HEK293 (cell line): ENCODE measurements at regions of chr22 and their contacts with region 1.

Region 1: GRCh38 chr22:38069372-38070249 is 12.4 kb downstream of the PICK1 start:
- H3K4me3 ChIP-seq: no peak overlapping the region
- H3K27ac ChIP-seq: no peak overlapping the region
- H3K4me1 ChIP-seq: no peaks in the 10 kb centered on the region
- CTCF ChIP-seq: peak; percentile 46; the same call in 1 of the 2 replicates

Region 2: GRCh38 chr22:38056969-38057891 is 12.4 kb before region 1 on chr22 and contains the start of gene PICK1:
- CTCF ChIA-PET with region 1: interaction called, 16 read pairs
- POLR2A ChIA-PET with region 1: no interaction called
- H3K4me3 ChIP-seq: peak within 1 kb of the TSS; percentile 57
- H3K27ac ChIP-seq: peak within 1 kb of the TSS; percentile 85
- H3K4me1 ChIP-seq: peaks cover 5% of the 10 kb centered on the region
- CTCF ChIP-seq: 0 out of 2 replicates have a peak, but pooled peaks have one; percentile 39